GM12878 (cell line): ENCODE measurements at regions of chrX and their contacts with region 1.

Region 1: DNA sequence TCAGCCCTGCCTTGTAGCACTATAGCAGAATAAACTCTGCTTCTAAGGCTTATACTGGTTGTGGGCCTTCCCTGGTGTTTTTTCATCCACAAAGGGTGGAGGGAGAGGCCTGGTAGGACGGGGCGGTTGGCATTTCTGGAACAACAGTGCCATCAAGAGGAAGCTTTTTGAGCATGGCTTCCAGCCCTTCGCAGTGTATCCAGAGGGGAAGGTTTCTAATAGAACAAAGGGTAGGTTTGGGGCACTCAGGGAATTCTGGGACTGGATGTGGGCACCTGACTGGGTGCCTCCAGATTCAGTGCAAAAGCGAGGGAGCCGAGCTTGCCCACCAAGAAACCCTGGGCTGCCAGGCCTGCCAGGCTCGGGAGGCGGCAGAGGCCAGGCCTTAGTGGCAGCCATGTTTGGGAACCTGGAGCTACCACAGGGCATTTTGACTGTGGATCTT is 229.6 kb upstream of the AGTR2 start:
- DNase-seq: peak; percentile 43
- ATAC-seq: peak; percentile 77
- H3K4me3 ChIP-seq: no peak overlapping the region
- H3K27ac ChIP-seq: 0 out of 2 replicates have a peak overlapping the region, but pooled peaks have one; percentile 5
- H3K4me1 ChIP-seq: peaks cover 11% of the 10 kb centered on the region; the same call in 1 of the 2 replicates
- H3K27me3 ChIP-seq: no peaks in the 10 kb centered on the region
- CTCF ChIP-seq: peak; percentile 17 to 70 (median 40); a peak in 5 of 6 replicates
- EP300 ChIP-seq: no peak
- POLR2A ChIP-seq: no peak
- RAD21 ChIP-seq: peak; percentile 90

Region 2: DNA sequence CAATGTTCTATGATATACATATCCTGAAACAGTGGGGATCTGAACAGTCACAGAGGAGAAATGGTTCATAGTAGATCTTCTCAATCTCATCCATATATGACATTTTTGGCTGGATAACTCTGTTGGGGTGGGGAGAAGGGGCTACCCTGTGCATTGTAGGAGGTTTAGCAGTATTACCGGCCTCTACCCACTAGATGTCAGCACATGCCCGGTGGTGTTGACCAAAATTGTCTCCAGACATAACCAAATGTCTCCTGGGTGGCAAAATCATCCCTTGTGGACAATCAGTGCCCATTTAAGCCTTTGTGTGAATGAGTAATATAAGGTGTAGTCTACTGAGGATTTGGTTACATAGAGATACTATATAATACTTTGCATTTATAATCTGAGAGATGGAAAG is 290.0 kb before region 1 on chrX:
- CTCF ChIA-PET with region 1: interaction called, 7 read pairs
- POLR2A ChIA-PET with region 1: no interaction called
- RAD21 ChIA-PET with region 1: interaction called, 3 read pairs
- SMC1A ChIA-PET with region 1: interaction called, 3 read pairs
- in situ Hi-C with region 1: loop called (anchors 10 kb)
- intact Hi-C with region 1: no loop called
- DNase-seq: peak; percentile 17
- ATAC-seq: peak; percentile 84
- H3K4me3 ChIP-seq: no peak overlapping the region
- H3K27ac ChIP-seq: no peak overlapping the region
- H3K4me1 ChIP-seq: no peaks in the 10 kb centered on the region
- H3K27me3 ChIP-seq: no peaks in the 10 kb centered on the region
- CTCF ChIP-seq: peak; percentile 61 to 72 (median 68)
- EP300 ChIP-seq: no peak
- POLR2A ChIP-seq: no peak
- RAD21 ChIP-seq: peak; percentile 78

Region 3: DNA sequence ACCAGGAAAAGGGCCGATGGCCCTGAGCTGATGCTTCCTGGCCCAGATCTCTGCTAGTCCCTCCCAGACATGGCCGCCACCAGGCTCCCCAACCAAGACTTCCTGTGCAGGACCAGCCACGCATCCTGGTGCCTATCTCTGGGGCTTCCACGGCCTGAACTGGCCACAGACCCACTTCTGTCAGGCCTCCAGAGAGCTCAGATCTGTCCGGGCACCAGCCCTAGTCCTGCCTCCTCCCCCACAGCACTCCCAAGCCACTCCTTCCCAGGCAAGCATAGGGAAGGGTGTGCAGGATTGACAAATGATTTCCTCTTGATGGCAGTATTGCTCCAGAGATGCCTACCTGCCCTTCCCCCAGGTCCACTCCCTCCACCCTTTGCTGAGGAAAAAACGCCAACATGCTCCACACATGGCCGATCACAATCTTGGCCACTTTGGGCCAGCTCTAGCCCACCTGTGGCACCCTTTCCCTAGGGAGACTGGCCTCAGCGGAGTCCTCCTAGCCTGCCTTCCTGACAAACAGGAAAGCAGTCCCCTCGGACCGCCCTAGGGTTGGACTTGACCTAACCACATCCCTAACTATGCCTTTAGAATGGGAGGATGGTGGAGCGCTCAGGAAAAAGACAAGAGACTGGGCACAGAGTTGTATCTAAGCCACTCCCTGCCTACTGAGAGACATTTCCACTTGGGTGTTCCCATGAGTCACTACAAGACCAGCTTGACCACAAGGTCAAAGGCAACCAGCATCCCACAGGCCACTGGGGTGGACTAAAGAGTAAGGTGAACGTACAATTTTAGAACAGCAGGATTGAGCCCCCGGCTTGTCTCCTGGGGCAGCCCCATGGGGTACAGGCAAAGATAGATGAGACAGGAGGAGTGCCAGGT is 47.9 kb before region 1 on chrX:
- CTCF ChIA-PET with region 1: interaction called, 3 read pairs
- POLR2A ChIA-PET with region 1: no interaction called
- RAD21 ChIA-PET with region 1: interaction called, 3 read pairs
- SMC1A ChIA-PET with region 1: interaction called, 4 read pairs
- in situ Hi-C with region 1: no loop called
- intact Hi-C with region 1: loop called (anchors 1 kb)
- DNase-seq: peak; percentile 73
- ATAC-seq: peak; percentile 75
- H3K4me3 ChIP-seq: no peak overlapping the region
- H3K27ac ChIP-seq: peak overlapping the region; percentile 32; the same call in 1 of the 2 replicates
- H3K4me1 ChIP-seq: peaks cover 6% of the 10 kb centered on the region; the same call in 1 of the 2 replicates
- H3K27me3 ChIP-seq: no peaks in the 10 kb centered on the region
- CTCF ChIP-seq: peak; percentile 15 to 64 (median 52); a peak in 5 of 6 replicates
- EP300 ChIP-seq: no peak
- POLR2A ChIP-seq: no peak
- RAD21 ChIP-seq: peak; percentile 89

Region 4: DNA sequence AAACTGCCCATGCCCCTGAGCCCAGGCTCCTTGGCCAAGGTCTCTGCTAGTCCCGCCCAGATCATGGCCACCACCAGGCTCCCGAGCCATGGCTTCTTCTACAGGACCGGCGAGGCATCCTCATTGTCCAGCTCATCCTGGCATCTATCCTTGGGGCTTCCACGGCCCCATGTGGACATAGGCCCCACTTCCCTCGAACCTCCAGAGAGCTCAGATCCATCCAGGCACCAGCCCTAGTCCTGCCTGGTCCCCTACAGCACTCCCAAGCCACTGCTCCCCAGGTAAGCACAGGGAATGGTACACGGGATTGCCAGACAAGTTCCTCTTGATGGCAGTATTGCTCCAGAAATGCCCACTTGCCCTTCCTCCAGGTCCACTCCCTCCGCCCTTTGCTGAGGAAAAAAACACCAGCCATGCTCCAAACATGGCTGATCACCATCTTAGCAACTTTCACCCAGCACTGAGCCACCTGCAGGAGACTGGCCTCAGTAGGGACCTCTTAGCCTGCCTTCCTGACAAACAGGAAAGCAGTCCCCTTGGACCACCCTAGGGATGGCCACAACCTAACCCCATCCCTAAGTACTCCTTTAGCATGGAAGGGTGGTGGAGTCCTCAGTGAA is 42.4 kb before region 1 on chrX:
- CTCF ChIA-PET with region 1: interaction called, 3 read pairs
- POLR2A ChIA-PET with region 1: no interaction called
- RAD21 ChIA-PET with region 1: no interaction called
- SMC1A ChIA-PET with region 1: interaction called, 4 read pairs
- in situ Hi-C with region 1: no loop called
- intact Hi-C with region 1: loop called (anchors 1 kb)
- DNase-seq: no peak
- ATAC-seq: no peak; the same call in 2 of the 3 replicates
- H3K4me3 ChIP-seq: no peak overlapping the region
- H3K27ac ChIP-seq: no peak overlapping the region
- H3K4me1 ChIP-seq: peaks cover 3% of the 10 kb centered on the region; the same call in 1 of the 2 replicates
- H3K27me3 ChIP-seq: no peaks in the 10 kb centered on the region
- CTCF ChIP-seq: peak in 2 of 3 experiments; percentile 25 to 37; a peak in 3 of 6 replicates
- EP300 ChIP-seq: no peak
- POLR2A ChIP-seq: no peak
- RAD21 ChIP-seq: peak; percentile 64

Region 5: DNA sequence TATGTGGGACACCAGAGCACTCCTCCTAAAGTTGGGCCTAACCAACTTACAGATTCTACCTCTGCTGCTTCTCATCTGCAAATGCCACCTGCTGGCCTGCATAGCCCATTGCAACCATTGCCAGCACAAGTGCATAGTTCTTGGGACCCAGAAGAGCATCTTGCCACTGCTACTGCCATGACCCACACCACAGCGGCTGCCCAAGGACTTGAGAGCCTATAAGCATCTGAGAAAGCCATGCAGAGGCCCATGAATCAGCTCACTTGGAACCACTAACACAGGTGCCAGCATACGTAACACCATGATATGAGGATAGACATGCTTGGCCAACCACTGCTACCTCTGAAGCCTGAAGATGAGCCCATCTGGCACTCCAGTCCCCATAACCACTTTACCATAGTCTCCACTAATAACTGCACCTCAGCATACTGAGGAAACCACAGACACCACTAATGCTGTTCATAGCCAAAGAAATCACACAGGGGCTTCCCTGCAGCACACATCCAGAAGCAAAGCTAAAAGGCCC is 28.5 kb before region 1 on chrX:
- CTCF ChIA-PET with region 1: interaction called, 9 read pairs
- POLR2A ChIA-PET with region 1: interaction called, 4 read pairs
- RAD21 ChIA-PET with region 1: interaction called, 4 read pairs
- SMC1A ChIA-PET with region 1: interaction called, 9 read pairs
- in situ Hi-C with region 1: loop called (anchors 5 kb)
- intact Hi-C with region 1: loop called (anchors 1 kb)
- DNase-seq: peak; percentile 57
- ATAC-seq: peak; percentile 96
- H3K4me3 ChIP-seq: no peak overlapping the region
- H3K27ac ChIP-seq: no peak overlapping the region
- H3K4me1 ChIP-seq: no peaks in the 10 kb centered on the region
- H3K27me3 ChIP-seq: no peaks in the 10 kb centered on the region
- CTCF ChIP-seq: peak; percentile 19 to 50 (median 49); a peak in 4 of 6 replicates
- EP300 ChIP-seq: peak; percentile 56 to 59; a peak in 2 of 4 replicates
- POLR2A ChIP-seq: no peak
- RAD21 ChIP-seq: peak; percentile 51

Region 6: GRCh38 chrX:115957862-115958483 is 17.1 kb after region 1 on chrX:
- CTCF ChIA-PET with region 1: interaction called, 6 read pairs
- POLR2A ChIA-PET with region 1: interaction called, 3 read pairs
- RAD21 ChIA-PET with region 1: interaction called, 21 read pairs
- SMC1A ChIA-PET with region 1: interaction called, 8 read pairs
- in situ Hi-C with region 1: no loop called
- intact Hi-C with region 1: no loop called
- DNase-seq: no peak
- ATAC-seq: peak; percentile 56
- H3K4me3 ChIP-seq: no peak overlapping the region
- H3K27ac ChIP-seq: no peak overlapping the region
- H3K4me1 ChIP-seq: no peaks in the 10 kb centered on the region
- H3K27me3 ChIP-seq: no peaks in the 10 kb centered on the region
- CTCF ChIP-seq: peak in 2 of 3 experiments; percentile 23 to 33; a peak in 3 of 6 replicates
- EP300 ChIP-seq: no peak
- POLR2A ChIP-seq: no peak
- RAD21 ChIP-seq: peak; percentile 66